Activated CD4-positive, alpha-beta T cell treated with anti-CD3 and anti-CD28 coated beads for 36 hours (primary cell): ENCODE measurements at regions of chr7 and their contacts with region 1.

Region 1: GRCh38 chr7:102279537-102280400 is 6.9 kb upstream of the SH2B2 start:
- DNase-seq: peak; percentile 79
- ATAC-seq: peak; percentile 92
- H3K4me3 Mint-ChIP-seq: no peak overlapping the region
- H3K27ac Mint-ChIP-seq: no peak overlapping the region
- H3K4me1 Mint-ChIP-seq: peaks cover 12% of the 10 kb centered on the region
- H3K27me3 Mint-ChIP-seq: peaks cover under 1% of the 10 kb centered on the region

Region 2: DNA sequence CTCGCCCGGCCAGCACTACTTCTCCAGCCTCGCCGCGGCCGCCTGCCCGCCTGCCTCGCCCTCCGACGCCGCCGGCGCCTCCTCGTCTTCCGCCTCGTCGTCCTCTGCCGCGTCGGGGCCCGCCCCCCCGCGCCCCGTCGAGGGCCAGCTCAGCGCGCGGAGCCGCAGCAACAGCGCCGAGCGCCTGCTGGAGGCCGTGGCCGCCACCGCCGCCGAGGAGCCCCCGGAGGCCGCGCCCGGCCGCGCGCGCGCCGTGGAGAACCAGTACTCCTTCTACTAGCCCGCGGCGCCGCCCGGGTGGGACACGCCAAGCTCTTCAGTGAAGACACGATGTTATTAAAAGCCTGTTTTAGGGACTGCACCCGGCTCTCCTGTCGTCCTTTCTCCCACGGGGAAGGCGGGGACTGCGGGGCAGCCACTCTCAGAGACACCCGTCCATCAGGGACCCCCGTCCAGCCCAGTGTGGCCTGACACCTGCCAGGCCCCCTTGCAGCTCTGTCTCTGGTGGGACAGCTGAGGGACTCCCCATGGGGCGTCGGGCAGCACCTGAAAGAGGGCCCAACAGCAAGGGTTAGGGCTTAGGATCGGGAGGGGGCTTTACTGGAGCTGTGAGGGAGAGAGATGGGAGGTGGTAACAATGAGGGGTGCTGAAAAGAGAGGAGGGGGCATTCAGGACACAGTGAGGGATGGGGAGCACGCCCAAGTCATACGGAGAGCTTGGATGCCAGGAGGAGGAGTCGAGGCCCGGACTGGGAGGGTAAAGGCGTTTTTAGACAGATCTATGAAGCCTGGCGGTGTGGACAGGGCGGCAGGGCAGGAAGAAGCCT is 41.8 kb after region 1 on chr7:
- CTCF ChIA-PET with region 1: no interaction called
- POLR2A ChIA-PET with region 1: no interaction called
- intact Hi-C with region 1: loop called in 1 of 2 experiments (anchors 2 kb)
- DNase-seq: peak; percentile 55
- ATAC-seq: peak; percentile 72
- H3K4me3 Mint-ChIP-seq: no peak overlapping the region
- H3K27ac Mint-ChIP-seq: no peak overlapping the region
- H3K4me1 Mint-ChIP-seq: no peaks in the 10 kb centered on the region
- H3K27me3 Mint-ChIP-seq: peaks cover 16% of the 10 kb centered on the region

Region 3: GRCh38 chr7:102390697-102391484 is 111.1 kb after region 1 on chr7:
- CTCF ChIA-PET with region 1: interaction called, 13 read pairs
- POLR2A ChIA-PET with region 1: no interaction called
- intact Hi-C with region 1: loop called (anchors 1 kb)
- DNase-seq: peak; percentile 82
- ATAC-seq: peak; percentile 79
- H3K4me3 Mint-ChIP-seq: no peak overlapping the region
- H3K27ac Mint-ChIP-seq: no peak overlapping the region
- H3K4me1 Mint-ChIP-seq: peaks cover 6% of the 10 kb centered on the region
- H3K27me3 Mint-ChIP-seq: no peaks in the 10 kb centered on the region